ENCODE measurements at regions of chr18 and their contacts with region 1.

Region 1: DNA sequence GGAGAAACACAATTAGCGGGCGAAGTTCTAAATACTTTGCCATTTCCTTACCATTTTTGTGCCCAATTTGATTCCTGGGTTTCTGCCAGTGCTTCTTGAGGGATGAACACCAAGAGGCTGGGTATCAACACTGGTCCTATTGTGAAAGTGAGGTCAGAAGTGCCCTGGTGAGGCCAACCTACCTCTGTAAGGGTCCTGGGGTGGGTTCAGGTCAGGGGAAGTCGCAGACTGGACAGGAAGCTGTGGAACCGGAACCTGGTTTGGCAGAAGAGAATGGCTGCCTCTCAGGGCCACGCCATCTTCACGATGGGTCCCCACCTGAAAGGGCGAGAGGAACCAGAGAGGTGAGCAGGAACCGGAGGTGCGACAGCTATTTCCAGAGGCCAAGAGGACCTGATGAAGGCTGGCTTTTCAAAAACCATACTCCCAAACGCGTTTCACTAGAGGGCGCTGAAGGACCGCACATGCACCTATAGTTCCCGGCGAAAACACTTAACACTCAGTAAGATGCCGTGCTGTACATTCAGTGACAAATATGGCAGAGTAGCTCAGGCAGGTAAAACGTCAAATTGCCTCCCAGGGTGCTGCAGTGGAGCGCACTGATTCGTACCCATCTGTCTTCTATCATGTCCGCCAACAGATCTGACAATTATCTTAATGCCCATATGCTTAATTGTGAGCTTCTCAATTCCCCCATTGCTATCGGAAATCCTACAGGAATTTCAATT is 275.3 kb upstream of the CCDC68 start:
- DNase-seq: peak; percentile 57
- ATAC-seq: peak; percentile 77
- H3K4me3 Mint-ChIP-seq: no peak overlapping the region
- H3K27ac Mint-ChIP-seq: peak overlapping the region; percentile 76
- H3K4me1 Mint-ChIP-seq: peaks cover 45% of the 10 kb centered on the region
- H3K27me3 Mint-ChIP-seq: no peaks in the 10 kb centered on the region
- CTCF ChIP-seq: peak; percentile 63

Region 2: DNA sequence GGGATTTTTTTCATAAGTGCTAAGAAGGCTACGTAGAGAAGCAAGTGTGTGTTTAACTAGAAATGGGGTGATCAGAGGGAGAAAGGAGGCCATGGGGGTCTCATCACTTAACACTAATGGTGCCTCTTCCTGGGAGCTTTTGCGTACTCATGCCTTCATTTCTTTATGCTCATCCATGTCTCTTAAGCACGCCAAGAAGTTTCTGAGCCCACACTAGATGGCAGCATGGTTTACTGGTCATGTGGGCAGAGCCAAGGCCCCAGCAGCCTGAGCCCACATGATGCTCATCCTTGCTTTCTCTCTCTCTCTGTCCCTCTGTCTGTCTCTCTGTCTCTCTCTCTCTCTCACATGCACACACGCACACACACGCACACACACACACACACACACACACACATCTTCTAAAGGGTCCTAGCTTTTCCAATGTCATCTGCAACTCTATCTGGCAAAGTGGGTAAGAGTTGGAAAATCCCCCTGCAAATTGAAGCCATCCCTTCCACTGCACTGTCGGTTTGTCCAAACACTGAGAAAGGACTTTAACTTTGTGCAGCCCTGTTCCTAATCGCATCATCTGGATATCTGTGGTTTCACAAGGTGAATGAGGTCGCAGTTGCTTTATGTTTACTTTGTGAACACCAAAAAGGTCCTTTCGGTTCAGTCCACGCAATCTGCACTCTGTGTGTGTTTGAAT is 138.1 kb before region 1 on chr18:
- CTCF ChIA-PET with region 1: interaction called, 5 read pairs
- POLR2A ChIA-PET with region 1: interaction called, 7 read pairs
- intact Hi-C with region 1: loop called (anchors 5 kb)
- DNase-seq: no peak
- ATAC-seq: peak; percentile 74
- H3K4me3 Mint-ChIP-seq: no peak overlapping the region
- H3K27ac Mint-ChIP-seq: peak overlapping the region; percentile 50
- H3K4me1 Mint-ChIP-seq: peaks cover 51% of the 10 kb centered on the region
- H3K27me3 Mint-ChIP-seq: no peaks in the 10 kb centered on the region
- CTCF ChIP-seq: no peak

Region 3: GRCh38 chr18:55265984-55266383 is 31.5 kb after region 1 on chr18:
- CTCF ChIA-PET with region 1: interaction called, 165 read pairs
- POLR2A ChIA-PET with region 1: interaction called, 16 read pairs
- intact Hi-C with region 1: no loop called
- DNase-seq: no peak
- ATAC-seq: peak; percentile 38
- H3K4me3 Mint-ChIP-seq: peak overlapping the region; percentile 44
- H3K27ac Mint-ChIP-seq: peak overlapping the region; percentile 93
- H3K4me1 Mint-ChIP-seq: peaks cover 73% of the 10 kb centered on the region
- H3K27me3 Mint-ChIP-seq: no peaks in the 10 kb centered on the region
- CTCF ChIP-seq: no peak

Region 4: DNA sequence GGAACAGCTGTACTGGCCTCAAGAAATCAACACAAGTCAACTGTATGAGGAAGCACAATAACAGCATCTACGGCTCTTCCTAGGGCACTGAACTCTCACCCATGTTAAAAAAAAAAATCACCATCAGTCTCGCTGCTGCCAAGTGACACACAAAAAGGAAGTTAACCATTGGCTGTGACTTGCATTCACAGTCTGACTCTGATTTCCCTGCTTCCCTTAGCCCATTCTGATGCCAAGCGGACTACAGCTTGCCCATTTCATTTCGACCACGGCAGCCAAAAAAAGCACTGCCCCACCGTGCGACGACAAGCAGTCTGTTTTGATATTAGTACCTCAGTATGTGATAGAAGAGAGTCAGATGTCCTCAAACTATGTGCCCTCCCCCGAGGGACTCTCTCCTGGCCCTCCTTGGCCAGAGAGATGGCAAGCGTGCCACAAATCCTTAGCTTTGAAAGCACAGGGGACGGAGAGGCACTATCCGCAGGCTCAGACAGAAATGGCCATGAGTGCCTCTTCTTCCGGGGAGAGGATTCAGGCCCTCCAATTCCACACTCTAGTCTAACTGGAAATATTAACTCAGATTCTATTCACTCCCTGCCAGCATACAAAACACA is 103.5 kb after region 1 on chr18:
- CTCF ChIA-PET with region 1: interaction called, 7 read pairs
- POLR2A ChIA-PET with region 1: no interaction called
- intact Hi-C with region 1: loop called (anchors 1 kb)
- DNase-seq: peak; percentile 24
- ATAC-seq: peak; percentile 81
- H3K4me3 Mint-ChIP-seq: peak overlapping the region; percentile 76
- H3K27ac Mint-ChIP-seq: peak overlapping the region; percentile 81
- H3K4me1 Mint-ChIP-seq: peaks cover 35% of the 10 kb centered on the region
- H3K27me3 Mint-ChIP-seq: no peaks in the 10 kb centered on the region
- CTCF ChIP-seq: no peak

Region 5: DNA sequence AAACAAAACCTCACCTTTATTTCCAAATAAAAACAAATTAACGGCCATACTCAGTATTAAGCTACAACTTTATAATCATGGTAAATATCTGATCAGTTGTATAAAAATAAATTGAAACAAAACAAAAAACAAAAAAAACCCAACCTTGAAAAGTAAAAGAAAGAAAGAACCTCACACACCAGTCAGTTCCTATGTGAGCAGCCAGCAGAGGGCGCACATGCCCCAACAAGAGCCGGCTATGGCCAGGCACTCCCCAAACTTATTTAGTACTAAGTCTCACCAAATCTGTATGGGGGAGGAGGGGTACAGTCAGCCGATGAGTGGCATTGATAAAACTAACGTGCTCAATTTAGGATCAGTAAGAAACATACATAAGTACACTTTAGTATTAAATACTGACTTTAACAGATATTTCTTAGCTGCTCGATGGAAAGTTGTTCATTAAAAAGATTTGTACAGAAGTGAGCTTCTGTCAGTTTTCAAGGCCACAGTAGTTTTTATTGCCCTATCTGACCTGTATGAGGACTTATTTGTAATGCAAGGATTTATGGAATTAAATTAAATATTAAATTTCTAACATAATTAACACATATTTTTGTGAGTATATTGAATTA is 180.8 kb after region 1 on chr18:
- CTCF ChIA-PET with region 1: interaction called, 26 read pairs
- POLR2A ChIA-PET with region 1: no interaction called
- intact Hi-C with region 1: loop called (anchors 1 kb)
- DNase-seq: peak; percentile 74
- ATAC-seq: peak; percentile 92
- H3K4me3 Mint-ChIP-seq: no peak overlapping the region
- H3K27ac Mint-ChIP-seq: peak overlapping the region; percentile 53
- H3K4me1 Mint-ChIP-seq: peaks cover 36% of the 10 kb centered on the region
- H3K27me3 Mint-ChIP-seq: no peaks in the 10 kb centered on the region
- CTCF ChIP-seq: peak; percentile 96

Region 6: DNA sequence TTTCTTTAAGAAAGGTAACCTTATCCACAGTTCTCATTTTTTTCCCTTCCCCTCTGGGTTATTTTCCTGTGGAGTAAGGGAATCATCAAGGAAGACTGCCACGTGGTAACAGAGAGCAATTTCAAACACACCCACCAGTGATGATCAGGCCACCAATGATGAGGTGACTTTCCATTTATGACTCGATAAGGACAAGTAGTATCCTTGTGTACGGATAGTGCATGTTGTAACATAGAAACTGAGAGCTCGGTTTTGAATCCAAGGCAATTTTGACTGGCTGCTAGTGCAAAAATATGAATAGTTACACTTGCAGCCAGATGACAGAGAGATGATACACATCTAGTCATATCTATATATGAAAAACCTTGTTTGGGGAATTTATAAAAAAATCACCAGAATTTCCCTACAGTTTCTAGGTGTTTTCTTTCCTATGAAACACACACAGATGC is 497.1 kb after region 1 on chr18:
- CTCF ChIA-PET with region 1: no interaction called
- POLR2A ChIA-PET with region 1: no interaction called
- intact Hi-C with region 1: no loop called
- DNase-seq: no peak
- ATAC-seq: no peak
- H3K4me3 Mint-ChIP-seq: no peak overlapping the region
- H3K27ac Mint-ChIP-seq: no peak overlapping the region
- H3K4me1 Mint-ChIP-seq: no peaks in the 10 kb centered on the region
- H3K27me3 Mint-ChIP-seq: no peaks in the 10 kb centered on the region
- CTCF ChIP-seq: no peak

Region 7: DNA sequence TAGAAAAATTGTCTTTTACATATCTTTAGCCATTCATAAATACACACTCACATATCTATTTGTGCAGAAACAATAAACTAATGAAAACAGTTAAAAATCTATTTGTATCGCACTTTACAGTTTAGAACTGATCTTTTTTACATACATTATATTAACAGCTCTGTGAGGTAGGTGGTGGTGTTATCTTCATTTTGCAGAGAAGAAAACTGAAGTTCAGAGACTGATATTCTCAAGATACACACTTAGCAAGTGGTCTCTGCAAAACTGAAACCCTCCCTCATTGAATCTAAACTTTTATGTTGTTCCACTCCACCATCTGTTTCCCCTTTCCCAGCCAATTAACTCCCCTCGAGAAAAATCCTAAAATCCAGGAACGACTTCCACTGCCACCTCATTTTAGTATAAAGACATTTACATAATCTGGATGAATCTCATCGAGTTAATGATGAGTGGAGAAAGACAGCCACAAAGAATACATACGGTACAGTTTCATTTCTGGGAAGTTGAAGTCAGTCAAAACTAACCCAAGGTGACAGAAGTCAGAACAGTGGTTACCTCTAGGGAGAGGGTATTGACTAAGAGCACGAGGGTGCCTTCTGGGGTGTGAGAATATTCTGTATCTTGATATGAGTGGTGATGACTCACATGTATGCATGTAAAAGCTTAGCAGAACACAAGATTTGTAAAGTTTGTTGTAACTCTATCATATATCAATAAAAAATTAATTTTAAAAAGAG is 877.7 kb after region 1 on chr18:
- CTCF ChIA-PET with region 1: no interaction called
- POLR2A ChIA-PET with region 1: no interaction called
- intact Hi-C with region 1: loop called (anchors 2 kb)
- DNase-seq: no peak
- ATAC-seq: peak; percentile 92
- H3K4me3 Mint-ChIP-seq: peak overlapping the region; percentile 64
- H3K27ac Mint-ChIP-seq: peak overlapping the region; percentile 72
- H3K4me1 Mint-ChIP-seq: peaks cover 50% of the 10 kb centered on the region
- H3K27me3 Mint-ChIP-seq: no peaks in the 10 kb centered on the region
- CTCF ChIP-seq: no peak

Region 8: GRCh38 chr18:56575819-56576663 is 1341.5 kb after region 1 on chr18:
- CTCF ChIA-PET with region 1: interaction called, 29 read pairs
- POLR2A ChIA-PET with region 1: interaction called, 7 read pairs
- intact Hi-C with region 1: loop called (anchors 1 kb)
- DNase-seq: no peak
- ATAC-seq: peak; percentile 64
- H3K4me3 Mint-ChIP-seq: no peak overlapping the region
- H3K27ac Mint-ChIP-seq: no peak overlapping the region
- H3K4me1 Mint-ChIP-seq: no peaks in the 10 kb centered on the region
- H3K27me3 Mint-ChIP-seq: peaks cover 5% of the 10 kb centered on the region
- CTCF ChIP-seq: no peak